ENCODE measurements at regions of chr6 and their contacts with region 1.

Region 1: GRCh38 chr6:45714741-45715507 is 300.7 kb downstream of the CLIC5 start:
- DNase-seq: no peak
- ATAC-seq: peak; percentile 85 to 90
- H3K4me3 ChIP-seq: no peak overlapping the region
- H3K27ac ChIP-seq: no peak overlapping the region
- H3K4me1 ChIP-seq: peaks cover 9% of the 10 kb centered on the region
- H3K27me3 ChIP-seq: no peaks in the 10 kb centered on the region
- CTCF ChIP-seq: peak; percentile 80

Region 2: DNA sequence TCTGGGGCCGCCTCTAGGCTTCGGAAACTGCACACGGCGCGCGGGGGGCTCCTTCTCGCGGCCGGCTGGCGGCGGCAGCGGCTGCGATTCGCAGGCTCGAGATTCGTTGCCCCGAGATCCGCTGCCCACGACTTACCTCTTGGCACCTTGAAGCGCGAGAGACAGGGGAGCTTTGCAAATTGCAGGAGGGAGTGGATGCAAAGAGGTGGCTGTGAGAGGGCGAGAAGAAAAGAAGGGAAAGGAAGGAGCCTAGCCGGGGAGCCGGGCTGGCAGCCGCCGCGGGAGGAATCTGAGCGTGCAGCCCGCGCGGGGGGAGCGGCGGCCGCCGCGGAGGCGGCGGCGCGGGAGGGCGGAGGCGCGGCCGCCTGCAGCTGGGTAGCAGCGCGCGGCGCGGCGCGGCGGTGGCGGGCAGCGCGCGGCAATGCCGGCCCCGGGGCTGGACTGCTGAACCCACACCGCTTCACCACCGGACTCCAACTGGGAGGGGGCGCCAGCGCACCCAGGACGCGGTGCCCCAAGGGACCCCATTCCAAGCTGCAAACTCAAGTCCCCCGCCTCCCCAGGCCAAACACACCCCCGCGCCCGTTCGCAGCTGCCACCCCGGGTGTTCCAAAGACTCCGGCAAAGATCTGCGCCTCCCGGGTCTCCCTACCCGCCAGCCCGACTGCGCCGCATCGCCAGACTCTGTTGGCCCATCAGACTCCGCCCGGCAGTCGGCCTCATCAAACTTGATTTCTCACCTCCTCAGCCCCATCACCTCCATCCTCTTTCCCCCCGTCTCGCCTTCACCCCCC is 293.0 kb before region 1 on chr6:
- intact Hi-C with region 1: loop called (anchors 10 kb)
- DNase-seq: peak; percentile 68
- ATAC-seq: peak; percentile 56 to 71
- H3K4me3 ChIP-seq: peak overlapping the region; percentile 60
- H3K27ac ChIP-seq: peak overlapping the region; percentile 78
- H3K4me1 ChIP-seq: peaks cover 39% of the 10 kb centered on the region
- H3K27me3 ChIP-seq: peaks cover 41% of the 10 kb centered on the region
- CTCF ChIP-seq: no peak

Measured in lower lobe of right lung (tissue), 2 donors.